Posterior vena cava (tissue), 2 donors: ENCODE measurements at regions of chr1 and their contacts with region 1.

Region 1: DNA sequence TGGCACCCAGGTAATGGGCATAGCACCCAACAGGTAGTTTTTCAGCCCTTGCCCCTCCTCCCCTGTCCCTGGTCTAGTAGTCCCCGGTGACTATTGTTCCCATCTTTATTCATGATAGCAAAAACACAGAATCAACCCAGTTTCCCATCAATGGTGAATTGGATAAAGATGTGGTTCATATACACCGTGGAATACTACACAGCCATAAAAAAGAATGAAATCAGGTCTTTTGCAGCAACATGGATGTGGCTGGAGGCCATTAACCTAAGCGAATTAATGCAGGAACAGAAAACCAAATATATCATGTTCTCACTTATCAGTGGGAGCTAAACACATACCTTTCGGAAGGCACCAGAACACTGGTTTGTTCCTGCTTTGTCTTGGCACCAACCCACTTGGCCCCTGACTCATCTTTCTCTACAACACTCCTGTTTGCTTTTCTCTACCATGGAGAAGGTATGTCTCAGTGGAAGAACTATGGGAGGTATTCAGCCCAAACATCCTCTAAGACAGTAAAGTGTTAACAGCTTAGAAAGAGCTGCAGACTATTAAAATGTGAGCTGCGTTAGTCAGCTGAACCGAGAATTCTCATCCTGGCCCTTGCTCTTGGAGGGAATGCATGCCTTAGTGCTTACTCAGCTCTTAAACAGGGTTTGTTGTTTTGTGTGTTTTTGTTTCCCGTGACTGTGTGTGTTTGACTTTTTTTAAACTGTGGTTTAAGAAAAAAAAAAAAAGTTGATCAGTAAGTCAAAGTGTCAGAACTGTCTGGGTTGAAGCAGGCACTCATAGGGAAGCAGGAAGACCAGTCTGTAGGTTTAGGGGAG is 203.0 kb downstream of the TOMM20 start:
- DNase-seq: no peak

Region 2: GRCh38 chr1:234969581-234970400 is 44.1 kb after region 1 on chr1:
- intact Hi-C with region 1: loop called in 1 of 2 experiments (anchors 5 kb)
- DNase-seq: peak; percentile 88

Region 3: DNA sequence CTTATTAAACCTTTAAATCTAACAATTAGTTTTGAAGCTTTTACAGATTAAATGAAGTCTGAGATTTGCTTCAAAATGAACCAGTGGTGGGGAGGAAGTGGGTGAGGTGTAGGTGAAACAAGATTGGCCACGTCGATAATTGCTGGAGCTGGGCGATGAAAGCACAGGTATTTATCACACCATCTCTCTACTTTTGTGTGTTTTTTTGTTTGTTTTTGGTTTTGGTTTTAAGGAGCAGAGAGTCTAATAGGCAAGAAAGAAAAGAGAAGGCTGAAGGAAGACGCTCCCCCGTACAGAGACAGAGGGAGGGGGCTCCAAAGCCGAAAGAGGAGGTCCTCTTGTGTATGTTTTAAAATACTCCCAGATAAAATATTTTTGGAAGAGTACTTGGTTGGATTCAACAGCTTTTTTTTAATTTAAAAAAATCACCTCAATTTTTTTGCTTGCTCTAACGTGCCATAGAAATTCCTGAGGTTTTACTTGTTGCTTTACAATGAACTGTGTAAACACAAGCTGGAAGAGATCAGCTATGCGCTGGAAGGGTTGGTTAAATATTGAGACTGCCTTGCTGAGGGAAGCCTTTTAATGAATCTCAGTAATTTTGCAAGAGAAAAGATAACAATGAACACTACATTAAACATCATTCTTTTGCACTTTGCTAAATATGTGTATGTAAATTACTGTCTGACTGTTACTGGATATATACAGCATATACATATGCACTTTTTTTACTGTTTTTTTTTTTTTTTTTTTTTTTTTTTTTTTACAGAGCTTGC is 1591.5 kb after region 1 on chr1:
- intact Hi-C with region 1: no loop called
- DNase-seq: no peak